SK-N-SH (cell line): ENCODE measurements at regions of chr6 and their contacts with region 1.

Region 1: GRCh38 chr6:130885392-130886192 is 58.4 kb downstream of the SMLR1 start:
- DNase-seq: peak; percentile 45
- H3K4me3 ChIP-seq: no peak overlapping the region
- H3K27ac ChIP-seq: no peak overlapping the region
- H3K4me1 ChIP-seq: no peaks in the 10 kb centered on the region; a peak in 1 of 4 replicates
- H3K27me3 ChIP-seq: peaks cover 9% of the 10 kb centered on the region; the same call in 1 of the 2 replicates
- CTCF ChIP-seq: peak; percentile 96
- EP300 ChIP-seq: no peak
- RAD21 ChIP-seq: peak; percentile 94

Region 2: DNA sequence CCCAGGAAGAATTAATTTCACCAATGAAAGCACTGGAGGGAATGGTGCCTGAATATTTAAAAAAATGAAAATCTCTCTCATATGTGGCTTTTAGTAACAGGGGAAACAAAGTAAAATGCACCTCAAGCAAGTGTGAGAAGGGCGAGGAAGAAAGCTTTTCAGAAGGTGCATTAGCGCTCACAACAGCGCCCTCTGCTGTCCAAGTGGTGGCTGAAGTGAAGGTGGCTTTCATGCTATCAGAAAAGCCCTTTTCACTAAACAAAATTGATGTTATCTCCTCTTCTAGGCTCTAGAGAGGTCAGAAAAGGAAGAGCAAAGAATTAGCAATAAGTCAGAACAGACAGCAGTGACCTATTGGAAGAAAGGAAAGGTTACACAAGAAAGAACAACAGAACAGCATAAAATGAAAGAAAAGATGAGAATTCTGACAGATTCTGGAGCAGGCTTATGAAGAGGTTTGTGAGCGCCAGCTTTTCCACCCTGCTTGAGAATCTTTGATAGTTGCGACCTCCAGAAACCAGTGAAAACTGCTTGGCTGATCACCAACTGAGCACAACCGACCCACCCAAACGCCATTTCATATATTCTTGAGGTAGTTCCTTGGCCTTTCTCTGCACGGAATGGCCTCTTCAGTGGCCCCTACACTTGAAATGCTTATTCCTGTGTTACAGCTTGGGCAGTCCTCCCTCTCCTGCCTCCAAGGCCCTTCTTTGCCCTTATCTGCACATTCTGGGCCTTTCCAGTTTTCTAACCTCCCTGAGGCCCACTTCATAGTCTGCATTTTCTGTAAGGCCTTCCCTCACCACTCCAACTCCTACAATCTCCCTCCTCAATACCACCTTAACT is 13.1 kb before region 1 on chr6:
- CTCF ChIA-PET with region 1: interaction called, 19 read pairs
- POLR2A ChIA-PET with region 1: no interaction called
- DNase-seq: peak; percentile 15
- H3K4me3 ChIP-seq: peak overlapping the region in 1 of 2 experiments; percentile 24; a peak in 1 of 4 replicates
- H3K27ac ChIP-seq: no peak overlapping the region
- H3K4me1 ChIP-seq: no peaks in the 10 kb centered on the region
- H3K27me3 ChIP-seq: no peaks in the 10 kb centered on the region; the same call in 1 of the 2 replicates
- CTCF ChIP-seq: peak; percentile 97
- EP300 ChIP-seq: no peak
- RAD21 ChIP-seq: peak; percentile 62

Region 3: GRCh38 chr6:130896249-130896648 is 10.7 kb after region 1 on chr6:
- CTCF ChIA-PET with region 1: interaction called, 11 read pairs
- POLR2A ChIA-PET with region 1: no interaction called
- DNase-seq: no peak
- H3K4me3 ChIP-seq: no peak overlapping the region
- H3K27ac ChIP-seq: no peak overlapping the region
- H3K4me1 ChIP-seq: no peaks in the 10 kb centered on the region
- H3K27me3 ChIP-seq: peaks cover 4% of the 10 kb centered on the region; the same call in 1 of the 2 replicates
- CTCF ChIP-seq: no peak
- EP300 ChIP-seq: no peak
- RAD21 ChIP-seq: no peak

Region 4: GRCh38 chr6:130923350-130923749 is 37.8 kb after region 1 on chr6:
- CTCF ChIA-PET with region 1: interaction called, 11 read pairs
- POLR2A ChIA-PET with region 1: no interaction called
- DNase-seq: no peak
- H3K4me3 ChIP-seq: no peak overlapping the region
- H3K27ac ChIP-seq: no peak overlapping the region
- H3K4me1 ChIP-seq: no peaks in the 10 kb centered on the region
- H3K27me3 ChIP-seq: peaks cover 25% of the 10 kb centered on the region; the same call in 1 of the 2 replicates
- CTCF ChIP-seq: no peak
- EP300 ChIP-seq: no peak
- RAD21 ChIP-seq: no peak

Region 5: GRCh38 chr6:131532580-131533039 is 647.0 kb after region 1 on chr6:
- CTCF ChIA-PET with region 1: interaction called, 32 read pairs
- POLR2A ChIA-PET with region 1: no interaction called
- DNase-seq: no peak
- H3K4me3 ChIP-seq: no peak overlapping the region
- H3K27ac ChIP-seq: no peak overlapping the region
- H3K4me1 ChIP-seq: peaks cover 0 to 3% of the 10 kb centered on the region in 2 experiments; a peak in 1 of 4 replicates
- H3K27me3 ChIP-seq: peaks cover 12% of the 10 kb centered on the region
- CTCF ChIP-seq: no peak
- EP300 ChIP-seq: no peak
- RAD21 ChIP-seq: no peak

Region 6: GRCh38 chr6:131909408-131910218 is 1024.0 kb after region 1 on chr6:
- CTCF ChIA-PET with region 1: interaction called, 10 read pairs
- POLR2A ChIA-PET with region 1: no interaction called
- DNase-seq: peak; percentile 42
- H3K4me3 ChIP-seq: no peak overlapping the region; a peak in 1 of 4 replicates
- H3K27ac ChIP-seq: no peak overlapping the region
- H3K4me1 ChIP-seq: no peaks in the 10 kb centered on the region
- H3K27me3 ChIP-seq: peaks cover 51% of the 10 kb centered on the region
- CTCF ChIP-seq: peak; percentile 88
- EP300 ChIP-seq: no peak
- RAD21 ChIP-seq: peak; percentile 64